ENCODE measurements at regions of chr13 and their contacts with region 1.

Region 1: GRCh38 chr13:45340926-45341750 is at the start of gene TPT1:
- DNase-seq: peak; percentile 100
- ATAC-seq: peak; percentile 85
- H3K4me3 Mint-ChIP-seq: peak within 1 kb of the TSS; percentile 99
- H3K27ac Mint-ChIP-seq: peak within 1 kb of the TSS; percentile 99
- H3K4me1 Mint-ChIP-seq: peaks cover 45% of the 10 kb centered on the region
- H3K27me3 Mint-ChIP-seq: no peaks in the 10 kb centered on the region
- total RNA-seq, gene TPT1: 3,408 to 3,964 TPM

Region 2: GRCh38 chr13:45119991-45120864 is 220.9 kb before region 1 on chr13 and contains the start of gene GTF2F2:
- CTCF ChIA-PET with region 1: interaction called, 3 read pairs
- POLR2A ChIA-PET with region 1: no interaction called
- intact Hi-C with region 1: loop called in 1 of 2 experiments (anchors 1 kb)
- DNase-seq: peak; percentile 90
- ATAC-seq: peak; percentile 68
- H3K4me3 Mint-ChIP-seq: no peak within 1 kb of the TSS
- H3K27ac Mint-ChIP-seq: no peak within 1 kb of the TSS
- H3K4me1 Mint-ChIP-seq: peaks cover 5% of the 10 kb centered on the region
- H3K27me3 Mint-ChIP-seq: no peaks in the 10 kb centered on the region
- total RNA-seq, gene GTF2F2: 19.9 to 25.6 TPM

Region 3: GRCh38 chr13:45367358-45367757 is 26.2 kb after region 1 on chr13:
- CTCF ChIA-PET with region 1: interaction called, 17 read pairs
- POLR2A ChIA-PET with region 1: interaction called, 9 read pairs
- intact Hi-C with region 1: loop called (anchors 1 kb)
- DNase-seq: peak; percentile 96
- ATAC-seq: peak; percentile 100
- H3K4me3 Mint-ChIP-seq: peak overlapping the region; percentile 21
- H3K27ac Mint-ChIP-seq: peak overlapping the region; percentile 89
- H3K4me1 Mint-ChIP-seq: peaks cover 53% of the 10 kb centered on the region
- H3K27me3 Mint-ChIP-seq: no peaks in the 10 kb centered on the region

Region 4: DNA sequence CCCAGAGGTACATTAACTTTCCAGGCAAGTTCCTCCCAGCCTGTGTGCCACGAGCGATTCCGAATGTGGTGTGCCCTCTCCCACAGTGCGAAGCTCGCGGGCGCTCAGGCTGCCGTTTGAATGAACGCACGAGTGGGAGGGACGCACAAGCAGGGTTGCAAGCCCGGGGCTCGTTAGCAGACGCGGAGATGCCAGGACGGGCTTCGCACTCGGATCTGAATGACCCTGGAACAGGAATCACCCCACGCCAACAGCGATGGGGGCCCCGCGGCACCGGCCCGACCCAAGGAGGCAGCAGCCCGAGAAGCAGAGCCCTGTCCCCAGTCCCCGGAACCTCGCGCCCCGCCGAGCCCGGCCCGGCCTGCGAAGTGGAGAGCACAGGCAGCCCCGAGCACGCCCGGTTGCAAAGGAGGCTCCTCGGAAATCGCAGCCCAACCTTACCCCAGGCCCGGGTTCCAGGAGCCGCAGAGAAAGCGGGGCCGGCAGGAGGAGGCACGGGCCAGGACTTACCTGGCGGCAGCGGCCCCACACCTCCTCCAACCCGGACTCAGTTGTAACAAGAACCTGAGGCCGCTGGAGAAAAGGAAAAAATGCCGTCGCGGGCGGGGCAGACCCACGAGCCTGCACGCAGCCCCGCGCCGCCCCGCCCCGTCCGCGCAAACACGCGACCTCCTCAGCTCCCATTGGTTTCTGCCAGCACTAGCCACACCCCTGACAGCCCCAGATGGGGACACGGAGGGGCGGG is 76.8 kb after region 1 on chr13 and contains the start of gene SLC25A30:
- CTCF ChIA-PET with region 1: interaction called, 12 read pairs
- POLR2A ChIA-PET with region 1: interaction called, 4 read pairs
- intact Hi-C with region 1: loop called (anchors 1 to 5 kb)
- DNase-seq: peak; percentile 94
- ATAC-seq: peak; percentile 92
- H3K4me3 Mint-ChIP-seq: peak within 1 kb of the TSS; percentile 84
- H3K27ac Mint-ChIP-seq: peak within 1 kb of the TSS; percentile 92
- H3K4me1 Mint-ChIP-seq: peaks cover 23% of the 10 kb centered on the region
- H3K27me3 Mint-ChIP-seq: no peaks in the 10 kb centered on the region
- total RNA-seq, gene SLC25A30: 17.7 to 18.4 TPM

Region 5: GRCh38 chr13:46052319-46053161 is 711.4 kb after region 1 on chr13 and contains the start of gene ZC3H13:
- CTCF ChIA-PET with region 1: no interaction called
- POLR2A ChIA-PET with region 1: no interaction called
- intact Hi-C with region 1: loop called in 1 of 2 experiments (anchors 1 kb)
- DNase-seq: peak; percentile 96
- ATAC-seq: peak; percentile 99
- H3K4me3 Mint-ChIP-seq: peak within 1 kb of the TSS; percentile 83
- H3K27ac Mint-ChIP-seq: peak within 1 kb of the TSS; percentile 94
- H3K4me1 Mint-ChIP-seq: peaks cover 34% of the 10 kb centered on the region
- H3K27me3 Mint-ChIP-seq: peaks cover 2% of the 10 kb centered on the region
- total RNA-seq, gene ZC3H13: 38.5 to 52.8 TPM